IMR-90 (cell line): ENCODE measurements at regions of chr6 and their contacts with region 1.

Region 1: DNA sequence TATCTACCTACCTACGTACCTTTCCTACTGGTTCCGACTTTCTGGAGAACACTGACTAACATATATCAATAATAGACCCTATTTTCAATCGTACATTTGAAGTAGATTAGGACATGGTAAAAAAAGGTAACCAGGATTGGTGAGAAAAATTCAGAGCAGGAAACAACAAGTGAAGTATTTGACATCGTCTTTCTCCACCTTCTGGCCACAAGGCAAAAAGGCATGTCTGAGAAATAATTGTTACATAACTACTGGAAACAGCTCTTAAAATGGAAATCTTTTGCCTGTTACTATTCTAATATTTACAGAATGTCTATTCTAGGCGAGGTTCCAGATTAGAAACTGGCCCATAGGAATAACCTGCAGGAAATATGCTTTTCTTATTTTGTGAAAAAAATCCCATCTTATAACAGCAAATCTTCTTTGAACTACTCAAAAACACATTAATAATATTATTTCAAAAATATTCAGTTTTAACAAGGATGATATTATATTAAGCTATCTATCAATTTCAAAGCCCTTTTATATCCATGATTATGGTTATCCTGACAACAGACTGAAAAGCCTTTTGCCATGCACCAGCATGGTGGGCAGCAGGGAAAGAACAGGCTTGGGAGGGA is 80.8 kb downstream of the RCAN2 start:
- DNase-seq: peak; percentile 42
- ATAC-seq: no peak
- H3K4me3 ChIP-seq: no peak overlapping the region
- H3K27ac ChIP-seq: no peak overlapping the region
- H3K4me1 ChIP-seq: peaks cover 2% of the 10 kb centered on the region; the same call in 1 of the 2 replicates
- H3K27me3 ChIP-seq: peaks cover 4% of the 10 kb centered on the region; the same call in 1 of the 2 replicates
- CTCF ChIP-seq: peak; percentile 72
- POLR2A ChIP-seq: no peak
- RAD21 ChIP-seq: peak; percentile 69

Region 2: GRCh38 chr6:45930420-45931040 is 479.9 kb before region 1 on chr6:
- CTCF ChIA-PET with region 1: interaction called, 4 read pairs
- POLR2A ChIA-PET with region 1: no interaction called
- dilution Hi-C with region 1: no loop called
- in situ Hi-C with region 1: no loop called
- intact Hi-C with region 1: loop called (anchors 1 kb)
- DNase-seq: peak; percentile 41
- ATAC-seq: peak; percentile 90
- H3K4me3 ChIP-seq: no peak overlapping the region
- H3K27ac ChIP-seq: no peak overlapping the region
- H3K4me1 ChIP-seq: no peaks in the 10 kb centered on the region
- H3K27me3 ChIP-seq: peaks cover 12% of the 10 kb centered on the region
- CTCF ChIP-seq: peak; percentile 84
- POLR2A ChIP-seq: no peak
- RAD21 ChIP-seq: peak; percentile 66